KBM-7 (cell line): ENCODE measurements at regions of chr13 and their contacts with region 1.

Region 1: DNA sequence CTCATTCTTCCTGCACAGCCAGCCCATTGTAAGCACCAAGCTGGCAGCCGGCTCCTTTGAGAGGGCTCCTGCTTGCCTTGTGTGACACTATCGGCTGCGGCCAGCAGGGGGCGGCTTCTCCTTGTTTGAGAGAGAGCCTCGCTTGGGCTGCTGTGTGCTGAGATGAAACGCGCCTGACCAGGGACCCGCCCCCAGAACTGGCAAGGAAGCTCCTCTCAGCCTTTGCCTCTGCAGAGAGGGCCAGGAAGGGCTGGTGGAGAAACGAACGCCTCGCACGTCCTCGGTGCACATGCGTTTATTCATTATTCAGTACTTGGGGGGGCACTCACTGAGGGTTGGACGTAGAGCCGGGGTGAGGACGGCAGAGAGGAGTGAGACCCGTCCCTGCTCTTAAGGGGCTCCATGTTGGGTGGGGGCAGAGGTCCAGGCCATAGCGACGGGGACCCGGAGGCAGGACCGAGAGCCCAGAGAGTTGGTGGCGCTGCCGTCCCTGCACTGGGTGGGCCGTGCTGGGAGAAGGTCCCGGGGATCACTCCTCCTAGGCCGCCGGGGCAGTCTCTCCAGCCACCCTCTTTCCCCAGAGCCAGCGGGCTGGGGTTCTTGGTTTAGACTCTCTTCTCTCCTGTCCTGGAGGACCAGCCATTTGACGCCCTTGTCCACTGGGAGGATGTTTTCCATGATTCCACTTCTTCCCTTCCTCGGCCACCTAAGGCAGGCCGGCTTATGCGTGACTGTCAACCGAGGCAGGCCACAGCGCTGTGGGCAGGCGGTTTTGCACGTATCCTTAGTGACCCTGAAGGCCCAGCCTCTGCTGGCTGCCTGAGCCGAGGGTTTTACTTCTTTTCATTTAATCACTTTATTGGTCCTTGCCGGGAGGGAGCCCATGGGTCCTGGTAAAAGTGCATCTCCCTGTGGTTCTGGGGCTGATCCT is 174.5 kb downstream of the KATNAL1 start:
- DNase-seq: peak; percentile 95

Region 2: DNA sequence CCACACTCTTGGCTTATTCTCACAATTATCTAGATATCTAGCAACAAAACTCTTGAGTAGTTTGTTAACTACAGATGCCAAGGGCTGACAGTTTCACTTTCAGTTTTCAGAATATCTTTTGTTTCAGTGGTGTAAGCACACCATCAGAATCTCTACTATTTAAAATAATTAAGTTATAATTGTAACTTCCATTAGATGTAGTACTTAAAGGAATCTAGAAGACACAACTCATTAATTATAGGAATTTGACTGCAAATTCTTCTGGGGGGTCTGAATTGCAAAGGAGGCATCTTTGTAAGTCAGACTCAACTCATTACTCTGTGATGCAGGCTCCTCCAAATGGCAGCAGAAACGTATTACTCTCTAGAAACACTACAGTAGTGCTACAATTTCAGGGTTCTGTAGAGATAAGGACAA is 440.0 kb after region 1 on chr13:
- in situ Hi-C with region 1: loop called (anchors 25 kb)
- DNase-seq: peak; percentile 44

Region 3: DNA sequence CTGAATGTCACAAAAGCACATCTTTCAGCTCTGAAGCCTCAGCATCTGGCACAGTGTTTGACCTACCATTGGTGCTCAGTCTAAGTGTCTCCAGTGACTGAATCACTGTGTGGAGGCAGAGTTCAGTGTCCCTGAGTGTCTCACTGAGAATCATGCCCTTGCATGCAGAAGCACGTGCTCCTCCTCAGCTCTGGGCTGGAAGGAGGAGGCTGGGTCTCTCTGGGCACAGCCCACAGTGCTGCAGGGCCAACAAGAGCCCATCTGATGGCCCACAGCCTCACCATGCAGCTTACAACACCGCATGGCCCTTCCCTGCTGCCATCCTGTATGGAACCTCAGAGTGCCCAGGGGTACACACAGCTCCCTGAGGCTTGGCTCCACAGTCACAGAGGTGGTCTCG is 885.6 kb after region 1 on chr13:
- in situ Hi-C with region 1: no loop called
- DNase-seq: no peak

Region 4: GRCh38 chr13:31044377-31045285 is 911.7 kb after region 1 on chr13:
- in situ Hi-C with region 1: loop called (anchors 25 kb)
- DNase-seq: peak; percentile 88